Common myeloid progenitor, CD34-positive (primary cell): ENCODE measurements at regions of chr13 and their contacts with region 1.

Region 1: DNA sequence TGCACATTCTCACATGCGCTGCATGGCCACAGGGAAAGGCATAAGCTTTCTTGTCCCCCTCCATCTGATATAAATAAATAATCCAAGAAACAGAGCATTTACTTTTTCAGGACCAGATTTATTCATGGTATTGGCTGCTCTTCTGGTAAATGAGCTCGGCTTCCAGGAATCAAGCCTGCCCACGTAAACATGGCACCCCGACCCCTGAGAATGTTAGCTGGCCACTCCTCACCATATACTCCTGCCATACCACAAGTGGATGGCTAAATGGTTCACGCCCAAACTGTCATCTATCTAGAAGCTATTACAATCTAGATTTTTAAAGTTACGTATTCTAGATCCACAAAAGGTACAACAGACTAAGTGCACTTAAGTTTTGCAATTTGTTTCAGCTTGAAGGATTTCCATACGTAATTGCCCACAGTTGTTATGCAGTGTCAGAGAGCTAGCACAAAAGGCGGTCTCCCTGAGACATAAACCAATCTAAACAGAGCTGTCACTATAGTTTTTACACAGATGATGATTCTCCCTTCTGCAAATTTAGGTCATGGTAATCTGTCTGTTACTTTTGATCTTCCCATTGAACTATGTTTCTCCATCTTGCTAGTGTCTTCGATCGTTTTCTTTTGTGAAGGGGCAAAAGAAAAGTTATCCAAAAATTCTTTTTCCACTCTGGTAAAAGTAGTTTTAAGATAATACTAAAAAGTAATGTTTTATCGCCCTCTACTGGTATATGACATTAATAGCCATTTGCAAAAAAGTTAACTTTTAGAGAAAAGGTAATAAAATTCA is 16.2 kb upstream of the FOXO1 start:
- DNase-seq: peak in 2 of 3 donors; percentile 56
- H3K4me3 ChIP-seq: peak overlapping the region in 1 of 7 experiments; percentile 48
- H3K27ac ChIP-seq: no peak overlapping the region
- H3K4me1 ChIP-seq: peaks cover 3 to 26% (median 16%) of the 10 kb centered on the region in 4 experiments
- H3K27me3 ChIP-seq: no peaks in the 10 kb centered on the region

Region 2: DNA sequence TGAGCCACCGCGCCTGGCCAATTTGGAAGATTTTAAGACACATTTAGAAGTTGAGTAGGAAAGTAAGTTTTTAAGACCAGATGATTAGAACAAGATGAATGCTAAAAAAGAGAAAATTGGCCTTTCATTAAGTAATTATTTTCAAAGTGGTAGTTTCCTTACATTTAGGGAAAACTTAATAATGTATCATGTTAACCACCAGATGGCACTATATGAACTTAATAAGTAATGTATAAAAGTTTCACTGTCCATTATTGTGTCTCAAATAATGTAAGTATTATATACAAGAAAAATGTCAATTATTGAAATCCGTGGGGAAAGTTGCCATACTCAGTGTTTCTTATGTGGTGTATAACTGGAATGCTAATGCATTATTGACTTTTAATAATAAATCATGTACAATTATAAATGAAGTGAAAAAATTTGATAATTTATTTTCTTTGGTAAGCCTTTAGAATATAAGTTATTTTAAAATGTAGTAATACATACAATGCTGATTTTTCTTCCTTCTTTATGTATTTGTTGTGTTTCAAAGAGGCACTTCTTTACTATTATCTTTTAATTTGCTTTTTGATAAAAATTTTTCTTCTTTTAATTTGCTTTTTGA is 998.0 kb before region 1 on chr13:
- CTCF ChIA-PET with region 1: interaction called, 14 read pairs
- POLR2A ChIA-PET with region 1: no interaction called
- DNase-seq: peak; percentile 38 to 69 (median 58)
- H3K4me3 ChIP-seq: no peak overlapping the region
- H3K27ac ChIP-seq: no peak overlapping the region
- H3K4me1 ChIP-seq: peaks cover 0 to 16% (median 2%) of the 10 kb centered on the region in 4 experiments
- H3K27me3 ChIP-seq: no peaks in the 10 kb centered on the region

Region 3: DNA sequence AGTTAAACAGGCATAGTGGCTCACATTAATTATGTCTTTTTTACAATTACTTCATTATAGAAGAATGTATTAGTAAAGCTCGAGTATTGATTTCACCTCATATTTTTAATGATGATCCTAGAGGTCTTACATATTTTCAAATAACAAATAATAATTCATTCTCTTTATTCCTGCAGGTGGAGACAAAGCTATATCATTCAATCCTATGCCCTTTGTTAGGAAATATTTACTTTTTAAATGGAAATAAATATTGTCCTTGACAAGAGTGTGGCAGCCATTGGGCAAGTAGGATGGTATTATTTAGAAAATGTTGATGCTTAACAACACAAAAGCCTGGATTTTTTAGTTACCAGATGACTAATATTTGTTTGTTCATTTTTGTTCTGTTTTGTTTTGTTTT is 899.6 kb before region 1 on chr13:
- CTCF ChIA-PET with region 1: interaction called, 24 read pairs
- POLR2A ChIA-PET with region 1: no interaction called
- DNase-seq: peak; percentile 11 to 46 (median 36)
- H3K4me3 ChIP-seq: no peak overlapping the region
- H3K27ac ChIP-seq: no peak overlapping the region
- H3K4me1 ChIP-seq: peaks cover 0 to 13% (median 6%) of the 10 kb centered on the region in 4 experiments
- H3K27me3 ChIP-seq: no peaks in the 10 kb centered on the region

Region 4: DNA sequence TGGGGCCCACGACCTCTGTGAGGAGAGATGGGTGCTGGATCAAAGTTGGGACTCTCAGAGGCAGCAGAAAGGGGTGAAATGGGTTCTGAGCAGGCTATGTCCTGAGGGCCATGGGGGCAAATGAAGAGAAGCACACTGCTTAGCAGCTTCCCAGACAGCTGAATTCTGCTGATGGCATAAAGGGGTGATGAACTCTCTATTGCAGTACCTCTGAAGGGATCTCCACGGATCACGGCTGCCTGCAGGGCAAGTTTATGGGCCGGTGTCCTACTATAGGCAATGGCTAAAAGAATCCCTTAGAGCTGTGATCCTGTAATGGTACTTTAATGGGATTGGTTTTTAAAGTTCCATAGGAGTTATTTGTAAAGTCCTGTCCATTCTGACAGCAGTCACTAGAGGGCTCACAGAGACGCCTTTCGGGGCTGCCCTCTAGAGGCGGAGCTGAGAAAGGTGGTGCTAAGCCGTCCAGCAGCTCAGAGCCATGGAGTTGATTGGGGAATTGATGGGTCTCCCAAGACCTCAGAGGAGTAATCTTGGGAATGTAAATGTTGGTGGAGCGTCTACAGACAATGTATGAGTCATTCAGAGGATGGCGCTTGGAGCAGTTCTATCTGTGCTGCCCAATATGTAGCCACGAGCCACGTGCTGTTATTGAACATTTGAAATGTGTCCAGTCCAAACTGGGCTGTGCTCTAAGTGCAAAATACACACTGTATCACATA is 739.9 kb before region 1 on chr13:
- CTCF ChIA-PET with region 1: interaction called, 35 read pairs
- POLR2A ChIA-PET with region 1: no interaction called
- DNase-seq: peak; percentile 71 to 80 (median 72)
- H3K4me3 ChIP-seq: no peak overlapping the region
- H3K27ac ChIP-seq: no peak overlapping the region
- H3K4me1 ChIP-seq: no peaks in the 10 kb centered on the region
- H3K27me3 ChIP-seq: no peaks in the 10 kb centered on the region

Region 5: DNA sequence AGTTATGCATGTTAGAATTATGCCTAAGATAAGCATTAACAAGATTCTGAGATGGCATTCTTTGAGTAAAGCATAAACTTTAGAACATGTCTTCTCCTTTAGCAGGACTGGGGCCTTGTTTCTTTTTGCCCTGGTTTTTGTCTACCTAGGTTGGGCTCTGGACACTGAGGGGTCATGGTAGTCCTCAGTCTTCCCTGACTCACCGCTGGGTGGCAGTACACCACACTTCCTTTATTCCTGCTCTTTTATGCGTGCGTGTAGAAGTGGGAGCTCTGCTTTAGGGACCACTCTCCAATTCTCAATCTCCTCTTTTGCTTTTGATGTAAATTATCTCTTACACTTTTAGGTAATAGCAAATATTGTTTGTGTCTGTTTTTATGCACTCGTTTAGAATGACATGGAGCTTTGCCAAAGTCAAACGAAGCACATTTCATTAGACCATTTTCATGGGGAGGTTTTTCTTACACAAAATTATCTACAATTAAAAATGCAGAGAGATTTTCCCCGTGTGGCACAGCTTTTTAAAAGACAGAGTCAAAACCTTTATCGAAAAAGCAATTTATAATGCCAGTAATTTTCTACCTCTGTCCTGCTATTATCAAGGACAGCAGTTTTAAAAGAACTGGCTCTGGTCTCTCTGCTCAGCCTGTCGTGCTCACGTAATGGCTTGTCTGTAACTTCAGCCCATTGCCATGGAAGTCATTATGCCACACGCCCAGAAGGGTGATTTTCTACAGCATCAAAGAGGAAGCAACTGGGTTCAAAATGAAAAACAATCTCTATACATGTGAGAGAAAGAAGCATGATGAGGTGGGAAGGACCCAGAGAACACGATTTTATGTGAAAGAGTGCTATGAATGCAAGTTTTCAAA is 613.2 kb before region 1 on chr13:
- CTCF ChIA-PET with region 1: interaction called, 21 read pairs
- POLR2A ChIA-PET with region 1: no interaction called
- DNase-seq: peak; percentile 70 to 79 (median 72)
- H3K4me3 ChIP-seq: no peak overlapping the region
- H3K27ac ChIP-seq: no peak overlapping the region
- H3K4me1 ChIP-seq: peaks cover 0 to 5% (median 2%) of the 10 kb centered on the region in 4 experiments
- H3K27me3 ChIP-seq: no peaks in the 10 kb centered on the region

Region 6: DNA sequence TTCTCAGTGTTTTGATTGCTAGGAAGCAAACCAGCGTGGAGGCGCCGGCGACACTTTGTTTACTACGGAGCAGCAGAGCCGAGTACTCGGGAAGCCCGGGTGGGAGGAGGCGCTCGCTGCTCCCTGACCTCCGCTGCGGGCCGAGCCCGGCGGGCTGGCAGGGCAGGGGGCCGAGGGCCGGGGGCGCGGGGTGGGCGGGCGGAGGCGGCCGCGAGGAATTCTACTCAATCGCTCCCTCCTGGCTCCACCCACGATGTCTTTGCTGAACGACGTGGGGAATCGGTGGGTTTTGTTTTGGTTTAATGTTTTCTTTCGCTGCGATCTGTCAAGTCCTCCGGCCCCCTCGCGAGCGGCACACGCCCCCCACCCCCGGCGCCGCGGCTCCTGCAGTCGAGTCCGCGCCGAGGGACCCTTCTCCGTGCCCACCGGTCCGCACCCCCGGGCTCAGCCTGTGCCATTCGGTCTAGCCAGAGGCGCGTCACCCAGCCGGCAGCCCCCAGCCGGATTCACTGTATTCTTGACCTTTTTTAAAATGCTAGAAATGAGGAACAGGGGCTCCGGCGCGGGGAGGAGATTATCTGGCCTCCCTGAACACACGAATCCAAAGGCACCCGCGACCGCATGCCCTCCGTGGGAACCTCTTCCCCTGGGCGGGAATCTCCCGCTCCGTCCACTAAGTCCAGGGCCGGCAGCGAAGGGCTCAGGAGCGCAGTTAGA is 15.6 kb before region 1 on chr13:
- CTCF ChIA-PET with region 1: interaction called, 56 read pairs
- POLR2A ChIA-PET with region 1: no interaction called
- DNase-seq: peak; percentile 54 to 86 (median 81)
- H3K4me3 ChIP-seq: peak overlapping the region; percentile 68 to 92 (median 83)
- H3K27ac ChIP-seq: peak overlapping the region; percentile 50 to 81
- H3K4me1 ChIP-seq: peaks cover 12 to 39% (median 29%) of the 10 kb centered on the region in 4 experiments
- H3K27me3 ChIP-seq: no peaks in the 10 kb centered on the region

Region 7: DNA sequence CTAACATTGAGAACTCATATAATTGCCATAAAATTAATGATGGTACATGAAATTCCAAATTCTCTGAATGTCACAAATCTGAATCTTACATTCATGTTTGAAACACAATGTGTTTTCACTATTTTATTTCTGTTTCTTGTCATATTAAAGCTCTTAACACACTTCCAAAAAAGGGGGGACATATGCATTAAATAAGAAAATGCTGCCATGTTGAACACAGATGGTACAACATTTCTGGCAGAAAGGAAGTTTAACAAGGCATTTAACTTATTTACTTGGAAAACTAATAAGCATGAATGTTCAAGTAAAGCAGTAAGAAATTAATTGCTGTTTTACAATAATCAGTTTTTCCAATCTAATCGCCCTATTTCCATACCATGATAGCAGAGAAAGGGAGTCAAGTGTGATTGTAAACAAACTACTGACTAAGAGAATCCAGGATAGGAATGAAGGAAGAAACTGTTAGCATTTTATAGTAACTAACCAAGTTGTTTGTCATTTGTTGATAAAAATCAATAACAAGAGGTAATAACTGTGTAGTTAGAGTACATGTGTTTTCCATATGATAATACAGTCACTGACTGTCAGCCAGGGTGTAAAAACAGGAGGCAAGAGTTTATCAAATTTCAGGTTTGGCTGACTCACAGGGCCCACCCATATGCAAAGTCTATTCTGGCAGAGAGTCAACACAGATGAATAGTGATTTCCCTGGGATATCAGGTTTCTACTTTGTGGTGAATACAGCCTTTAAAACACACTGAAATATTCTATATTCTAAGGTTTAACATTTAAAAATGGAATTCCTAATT is 10.5 kb before region 1 on chr13:
- CTCF ChIA-PET with region 1: interaction called, 56 read pairs
- POLR2A ChIA-PET with region 1: interaction called, 3 read pairs
- DNase-seq: peak; percentile 70 to 92 (median 88)
- H3K4me3 ChIP-seq: no peak overlapping the region
- H3K27ac ChIP-seq: peak overlapping the region in 1 of 2 experiments; percentile 56
- H3K4me1 ChIP-seq: peaks cover 9 to 29% (median 14%) of the 10 kb centered on the region in 4 experiments
- H3K27me3 ChIP-seq: no peaks in the 10 kb centered on the region